ENCODE measurements at regions of chr5 and their contacts with region 1.

Region 1: DNA sequence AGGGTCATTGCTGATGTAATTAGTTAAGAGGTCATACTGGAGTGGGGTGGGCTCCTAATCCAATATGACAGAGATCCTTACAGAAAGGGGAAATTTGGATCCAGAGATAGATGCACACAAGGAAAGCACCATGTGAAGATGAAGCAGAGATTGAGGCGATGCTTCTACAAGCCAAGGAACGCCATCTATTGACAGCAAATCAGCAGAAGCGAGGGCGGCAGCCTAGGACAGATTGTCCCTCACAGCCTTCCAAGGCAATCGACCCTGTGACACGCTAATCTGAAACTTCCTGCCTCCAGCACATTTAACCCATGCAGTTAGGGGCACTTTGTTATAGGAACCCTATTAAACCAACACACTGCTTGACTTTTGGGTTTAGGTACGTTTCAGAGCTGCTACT is 285.1 kb upstream of the DAP start:
- DNase-seq: no peak
- ATAC-seq: peak in 3 of 8 donors; percentile 29 to 62 (median 42)
- H3K4me3 ChIP-seq: no peak overlapping the region
- H3K27ac ChIP-seq: no peak overlapping the region
- H3K4me1 ChIP-seq: peaks cover 0 to 4% (median 0%) of the 10 kb centered on the region in 9 donors
- H3K27me3 ChIP-seq: no peaks in the 10 kb centered on the region
- CTCF ChIP-seq: peak in 4 of 9 donors; percentile 20 to 33 (median 24)

Region 2: GRCh38 chr5:11010429-11011210 is 35.5 kb before region 1 on chr5:
- intact Hi-C with region 1: loop called in 1 of 10 experiments (anchors 1 kb)
- DNase-seq: no peak
- ATAC-seq: peak in 3 of 8 donors; percentile 40 to 47 (median 40)
- H3K4me3 ChIP-seq: no peak overlapping the region
- H3K27ac ChIP-seq: peak overlapping the region in 5 of 10 donors; percentile 52 to 72 (median 66)
- H3K4me1 ChIP-seq: peaks cover 0 to 37% (median 6%) of the 10 kb centered on the region in 9 donors
- H3K27me3 ChIP-seq: no peaks in the 10 kb centered on the region
- CTCF ChIP-seq: no peak

Measured in heart right ventricle (tissue), 16 donors.